CD14-positive monocyte (primary cell): ENCODE measurements at regions of chr13 and their contacts with region 1.

Region 1: DNA sequence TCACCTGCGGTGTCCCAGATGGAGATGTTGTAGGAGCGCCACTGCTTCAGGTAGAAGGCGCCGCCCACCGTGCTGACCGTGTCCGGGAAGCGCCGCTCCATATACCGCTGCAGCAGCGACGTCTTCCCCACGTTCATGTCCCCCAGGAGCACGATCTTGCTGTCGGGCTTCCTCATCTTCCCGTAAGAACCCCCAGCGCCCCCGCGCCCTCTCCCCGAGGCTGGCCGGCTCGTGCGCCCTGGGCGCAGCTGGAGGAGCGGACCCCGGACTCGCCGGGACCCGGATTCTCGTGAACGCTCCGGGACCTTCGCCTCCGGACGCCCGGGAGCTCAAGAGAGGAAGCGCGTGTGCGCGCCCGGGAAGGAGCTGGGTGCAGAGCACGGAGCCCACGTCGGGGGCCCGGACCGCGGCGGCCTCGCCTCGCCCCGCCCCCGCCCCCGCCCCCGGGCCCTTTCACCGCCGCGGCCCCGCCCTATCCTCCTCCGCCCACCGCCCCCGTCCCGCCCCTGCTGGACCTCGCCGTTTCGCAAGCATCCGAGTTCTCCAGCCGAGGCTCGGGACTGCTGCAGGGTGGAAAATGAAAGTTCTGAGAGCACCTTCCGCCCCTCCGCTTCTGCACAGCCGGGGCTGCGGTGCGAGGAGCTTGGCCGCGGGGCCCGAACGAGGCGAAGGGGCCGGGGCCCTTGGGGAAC is at the start of gene RAB20:
- DNase-seq: peak; percentile 77 to 89 (median 89)
- H3K4me3 ChIP-seq: peak within 1 kb of the TSS; percentile 71 to 93 (median 89)
- H3K4me3 Mint-ChIP-seq: peak within 1 kb of the TSS; percentile 99
- H3K27ac ChIP-seq: peak within 1 kb of the TSS; percentile 87 to 92
- H3K27ac Mint-ChIP-seq: peak within 1 kb of the TSS; percentile 93 to 97 (median 95)
- H3K4me1 ChIP-seq: peaks cover 29 to 64% of the 10 kb centered on the region in 2 donors
- H3K4me1 Mint-ChIP-seq: peaks cover 59% of the 10 kb centered on the region
- H3K27me3 ChIP-seq: no peaks in the 10 kb centered on the region
- H3K27me3 Mint-ChIP-seq: peaks cover 0 to 3% (median 1%) of the 10 kb centered on the region in 3 donors
- CTCF ChIP-seq: no peak
- polyA plus RNA-seq, gene RAB20: 37.8 to 77.5 (median 43.1) TPM

Region 2: DNA sequence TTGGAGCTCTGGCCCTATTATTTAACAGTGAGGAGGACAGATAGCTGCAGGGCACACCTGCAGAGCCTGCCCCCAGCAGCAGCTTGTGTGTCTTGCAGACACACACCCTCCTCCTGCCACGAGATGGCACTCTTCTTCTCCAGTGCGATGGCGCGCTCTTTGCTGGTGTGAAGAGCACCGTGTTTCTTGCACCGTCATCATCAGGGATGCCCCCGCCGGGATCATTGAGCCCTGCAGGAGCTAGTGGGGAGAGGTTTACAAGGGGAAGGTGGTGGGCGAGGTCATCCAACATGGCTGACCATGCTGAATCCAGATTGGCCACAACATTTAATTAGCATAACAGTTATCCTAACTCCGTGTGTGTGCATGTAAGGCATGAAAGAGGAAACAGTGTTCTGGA is 105.5 kb before region 1 on chr13:
- intact Hi-C with region 1: loop called (anchors 5 kb)
- DNase-seq: peak; percentile 58 to 85 (median 66)
- H3K4me3 ChIP-seq: peak overlapping the region in 1 of 3 experiments; percentile 39
- H3K4me3 Mint-ChIP-seq: peak overlapping the region; percentile 53 to 80
- H3K27ac ChIP-seq: no peak overlapping the region
- H3K27ac Mint-ChIP-seq: peak overlapping the region in 4 of 7 donors; percentile 16 to 87 (median 30)
- H3K4me1 ChIP-seq: peaks cover 6 to 7% of the 10 kb centered on the region in 2 donors
- H3K4me1 Mint-ChIP-seq: peaks cover 7% of the 10 kb centered on the region
- H3K27me3 ChIP-seq: no peaks in the 10 kb centered on the region
- H3K27me3 Mint-ChIP-seq: peaks cover 6 to 15% (median 12%) of the 10 kb centered on the region in 3 donors
- CTCF ChIP-seq: peak; percentile 90

Region 3: GRCh38 chr13:110463871-110464510 is 97.5 kb before region 1 on chr13:
- intact Hi-C with region 1: loop called (anchors 5 kb)
- DNase-seq: peak; percentile 67 to 88 (median 74)
- H3K4me3 ChIP-seq: no peak overlapping the region
- H3K4me3 Mint-ChIP-seq: peak overlapping the region in 1 of 2 donors; percentile 73
- H3K27ac ChIP-seq: peak overlapping the region; percentile 29 to 49
- H3K27ac Mint-ChIP-seq: peak overlapping the region; percentile 23 to 83 (median 43)
- H3K4me1 ChIP-seq: peaks cover 11 to 15% of the 10 kb centered on the region in 2 donors
- H3K4me1 Mint-ChIP-seq: peaks cover 30% of the 10 kb centered on the region
- H3K27me3 ChIP-seq: no peaks in the 10 kb centered on the region
- H3K27me3 Mint-ChIP-seq: peaks cover 5 to 11% (median 6%) of the 10 kb centered on the region in 3 donors
- CTCF ChIP-seq: no peak

Region 4: DNA sequence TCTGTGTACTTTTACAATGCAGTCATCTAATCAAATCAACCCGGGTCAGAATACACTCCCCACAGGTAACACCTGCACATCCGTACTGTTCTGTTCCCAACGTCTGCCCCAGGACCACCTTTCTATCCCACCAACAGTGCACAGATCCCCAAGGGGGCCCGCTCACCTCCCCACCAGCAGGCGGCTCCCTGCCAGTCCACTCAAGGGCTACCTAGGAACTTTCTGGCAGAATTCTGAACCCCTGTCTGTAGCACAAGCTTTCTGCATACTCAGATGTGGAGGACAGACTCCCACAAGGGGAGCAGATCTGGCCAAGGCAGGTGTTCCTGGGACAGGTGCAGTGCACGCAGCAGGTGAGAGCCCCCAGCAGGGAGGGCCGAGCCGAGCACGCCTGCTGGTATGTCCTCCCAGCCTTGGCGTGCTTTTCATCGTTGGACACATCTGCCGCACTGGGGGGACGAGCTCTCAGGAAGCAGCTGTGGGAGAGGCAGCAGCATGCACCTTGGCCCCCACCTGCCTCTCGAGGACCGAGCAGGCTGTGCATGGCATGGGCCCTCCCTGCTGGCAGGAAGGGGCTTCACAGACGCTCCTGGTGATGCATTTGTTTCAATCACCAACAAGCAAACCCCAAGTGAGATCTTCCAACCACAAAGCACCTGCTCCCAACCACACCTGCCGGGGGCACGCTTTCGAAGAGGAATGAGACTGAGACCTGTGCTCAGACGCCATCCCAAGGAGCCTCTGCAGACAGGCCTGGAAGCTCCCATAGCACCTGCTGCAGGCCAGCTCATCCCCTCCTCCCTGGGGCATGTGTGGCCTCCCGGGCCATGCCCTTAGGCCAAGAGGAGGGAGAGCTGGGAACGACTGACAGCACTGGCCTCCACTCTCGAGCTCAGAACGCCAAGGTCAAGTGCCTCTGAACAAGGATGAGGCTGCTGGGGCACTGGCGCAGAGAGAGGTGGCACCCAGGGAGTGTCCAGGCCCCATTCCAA is 35.9 kb before region 1 on chr13:
- intact Hi-C with region 1: loop called in 1 of 2 experiments (anchors 5 kb)
- DNase-seq: no peak
- H3K4me3 ChIP-seq: no peak overlapping the region
- H3K4me3 Mint-ChIP-seq: no peak overlapping the region
- H3K27ac ChIP-seq: no peak overlapping the region
- H3K27ac Mint-ChIP-seq: peak overlapping the region in 2 of 7 donors; percentile 42 to 71
- H3K4me1 ChIP-seq: peaks cover 76 to 89% of the 10 kb centered on the region in 2 donors
- H3K4me1 Mint-ChIP-seq: peaks cover 90% of the 10 kb centered on the region
- H3K27me3 ChIP-seq: no peaks in the 10 kb centered on the region
- H3K27me3 Mint-ChIP-seq: peaks cover 0 to 8% (median 0%) of the 10 kb centered on the region in 3 donors
- CTCF ChIP-seq: no peak

Region 5: DNA sequence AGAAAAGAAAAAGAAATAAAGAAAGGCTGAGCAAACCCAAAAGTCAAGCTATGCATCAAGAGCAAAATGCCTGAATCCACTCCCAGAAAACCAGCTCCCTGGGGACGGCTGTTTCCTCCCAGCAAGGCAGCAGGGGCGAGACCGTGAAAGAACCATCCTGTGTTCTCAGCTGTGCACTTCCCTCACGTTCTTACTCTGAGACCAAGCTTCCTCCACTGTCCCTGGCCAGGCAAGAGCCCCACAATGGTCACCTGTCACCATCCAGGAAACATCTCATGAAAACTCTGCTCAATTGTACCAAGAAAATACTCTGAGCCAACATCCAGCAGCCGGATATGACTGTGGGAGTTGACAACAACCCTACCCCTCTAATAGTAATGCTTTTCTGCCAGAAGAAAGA is 22.9 kb before region 1 on chr13:
- intact Hi-C with region 1: loop called in 1 of 2 experiments (anchors 1 kb)
- DNase-seq: peak in 1 of 3 donors; percentile 51
- H3K4me3 ChIP-seq: no peak overlapping the region
- H3K4me3 Mint-ChIP-seq: no peak overlapping the region
- H3K27ac ChIP-seq: peak overlapping the region in 1 of 2 donors; percentile 14
- H3K27ac Mint-ChIP-seq: peak overlapping the region in 6 of 7 donors; percentile 7 to 93 (median 41)
- H3K4me1 ChIP-seq: peaks cover 49 to 54% of the 10 kb centered on the region in 2 donors
- H3K4me1 Mint-ChIP-seq: peaks cover 66% of the 10 kb centered on the region
- H3K27me3 ChIP-seq: no peaks in the 10 kb centered on the region
- H3K27me3 Mint-ChIP-seq: no peaks in the 10 kb centered on the region
- CTCF ChIP-seq: no peak

Region 6: GRCh38 chr13:111474136-111475002 is 912.9 kb after region 1 on chr13:
- intact Hi-C with region 1: no loop called
- DNase-seq: no peak
- H3K4me3 ChIP-seq: no peak overlapping the region
- H3K4me3 Mint-ChIP-seq: no peak overlapping the region
- H3K27ac ChIP-seq: no peak overlapping the region
- H3K27ac Mint-ChIP-seq: no peak overlapping the region
- H3K4me1 ChIP-seq: no peaks in the 10 kb centered on the region
- H3K4me1 Mint-ChIP-seq: no peaks in the 10 kb centered on the region
- H3K27me3 ChIP-seq: no peaks in the 10 kb centered on the region
- H3K27me3 Mint-ChIP-seq: peaks cover 0 to 5% (median 3%) of the 10 kb centered on the region in 3 donors
- CTCF ChIP-seq: no peak